OCI-LY7 (cell line): ENCODE measurements at regions of chr11 and their contacts with region 1.

Region 1: GRCh38 chr11:33808228-33808828 is 34.0 kb upstream of the FBXO3 start:
- DNase-seq: peak; percentile 77
- H3K4me3 ChIP-seq: no peak overlapping the region
- H3K27ac ChIP-seq: no peak overlapping the region
- H3K4me1 ChIP-seq: no peaks in the 10 kb centered on the region
- CTCF ChIP-seq: peak; percentile 94

Region 2: GRCh38 chr11:33987975-33988580 is 179.8 kb after region 1 on chr11:
- CTCF ChIA-PET with region 1: interaction called, 4 read pairs
- POLR2A ChIA-PET with region 1: no interaction called
- intact Hi-C with region 1: loop called (anchors 1 kb)
- DNase-seq: peak; percentile 84
- H3K4me3 ChIP-seq: no peak overlapping the region
- H3K27ac ChIP-seq: no peak overlapping the region
- H3K4me1 ChIP-seq: no peaks in the 10 kb centered on the region
- CTCF ChIP-seq: peak; percentile 89